ENCODE measurements at regions of chr9 and their contacts with region 1.

Region 1: GRCh38 chr9:128007566-128008138 is 26.9 kb upstream of the EEIG1 start:
- DNase-seq: peak; percentile 75 to 96 (median 90)
- H3K4me3 ChIP-seq: peak overlapping the region; percentile 67
- H3K4me3 Mint-ChIP-seq: peak overlapping the region; percentile 65 to 92 (median 77)
- H3K27ac ChIP-seq: peak overlapping the region; percentile 53
- H3K27ac Mint-ChIP-seq: peak overlapping the region; percentile 91 to 99 (median 97)
- H3K4me1 ChIP-seq: peaks cover 76% of the 10 kb centered on the region
- H3K4me1 Mint-ChIP-seq: peaks cover 40 to 81% (median 54%) of the 10 kb centered on the region in 3 donors
- H3K27me3 ChIP-seq: no peaks in the 10 kb centered on the region
- H3K27me3 Mint-ChIP-seq: no peaks in the 10 kb centered on the region

Region 2: GRCh38 chr9:127763918-127764384 is 243.7 kb before region 1 on chr9:
- CTCF ChIA-PET with region 1: no interaction called
- POLR2A ChIA-PET with region 1: no interaction called
- DNase-seq: peak in 1 of 5 donors; percentile 23
- H3K4me3 ChIP-seq: no peak overlapping the region
- H3K4me3 Mint-ChIP-seq: peak overlapping the region in 1 of 7 donors; percentile 64
- H3K27ac ChIP-seq: no peak overlapping the region
- H3K27ac Mint-ChIP-seq: peak overlapping the region; percentile 57 to 94 (median 72)
- H3K4me1 ChIP-seq: peaks cover 58% of the 10 kb centered on the region
- H3K4me1 Mint-ChIP-seq: peaks cover 60 to 80% (median 67%) of the 10 kb centered on the region in 3 donors
- H3K27me3 ChIP-seq: no peaks in the 10 kb centered on the region
- H3K27me3 Mint-ChIP-seq: peaks cover 0 to 3% of the 10 kb centered on the region in 2 donors

Region 3: DNA sequence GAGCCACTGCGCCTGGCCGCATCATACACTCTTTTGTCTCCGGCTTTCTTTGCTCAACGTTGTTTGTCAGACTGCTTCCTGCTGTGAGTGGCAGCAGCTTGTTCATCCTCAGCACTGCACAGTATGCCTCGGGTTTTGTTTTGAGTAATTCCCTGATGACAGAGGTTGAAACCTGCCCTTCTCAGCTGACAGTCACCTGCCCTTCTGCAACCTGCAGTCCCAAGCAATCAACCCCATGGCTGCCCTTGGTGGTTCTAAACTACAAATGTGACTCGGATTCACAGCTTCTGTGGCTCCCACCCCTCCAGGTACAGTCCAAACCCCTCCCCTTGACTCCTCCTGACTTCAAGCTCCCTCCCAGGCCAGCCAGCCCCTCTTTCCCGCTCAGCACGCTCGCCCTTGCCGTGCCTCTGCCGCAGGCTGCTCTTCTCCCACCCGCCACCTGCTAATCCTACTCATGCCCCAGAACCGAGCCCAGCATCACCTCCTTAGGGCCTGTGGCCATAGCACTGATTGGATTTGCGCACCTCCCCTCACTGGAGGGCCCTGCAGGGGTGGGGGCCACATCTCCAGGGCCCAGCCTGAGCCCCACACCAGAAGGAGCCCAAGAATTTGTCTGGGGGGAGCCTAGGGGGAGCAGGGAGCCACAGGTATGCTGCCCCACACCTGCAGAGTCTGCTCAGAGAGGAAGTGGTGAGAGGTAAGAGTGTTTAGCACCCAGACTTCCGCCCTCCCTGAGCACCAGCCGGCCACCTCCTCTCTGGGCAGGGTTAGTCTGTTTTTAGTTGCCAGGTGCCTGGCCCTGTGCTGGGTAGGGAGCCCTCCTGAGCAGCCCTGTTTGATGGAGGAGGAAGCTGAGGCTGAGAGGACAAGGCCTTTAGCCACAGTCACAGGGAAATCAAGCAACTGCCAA is 37.0 kb before region 1 on chr9:
- CTCF ChIA-PET with region 1: interaction called, 3 read pairs
- POLR2A ChIA-PET with region 1: interaction called, 15 read pairs
- DNase-seq: peak; percentile 36 to 84 (median 75)
- H3K4me3 ChIP-seq: peak overlapping the region; percentile 70
- H3K4me3 Mint-ChIP-seq: peak overlapping the region; percentile 85 to 99 (median 95)
- H3K27ac ChIP-seq: peak overlapping the region; percentile 55
- H3K27ac Mint-ChIP-seq: peak overlapping the region; percentile 87 to 100 (median 98)
- H3K4me1 ChIP-seq: peaks cover 99% of the 10 kb centered on the region
- H3K4me1 Mint-ChIP-seq: peaks cover 95 to 100% (median 100%) of the 10 kb centered on the region in 3 donors
- H3K27me3 ChIP-seq: no peaks in the 10 kb centered on the region
- H3K27me3 Mint-ChIP-seq: peaks cover 0 to 2% of the 10 kb centered on the region in 2 donors

Region 4: DNA sequence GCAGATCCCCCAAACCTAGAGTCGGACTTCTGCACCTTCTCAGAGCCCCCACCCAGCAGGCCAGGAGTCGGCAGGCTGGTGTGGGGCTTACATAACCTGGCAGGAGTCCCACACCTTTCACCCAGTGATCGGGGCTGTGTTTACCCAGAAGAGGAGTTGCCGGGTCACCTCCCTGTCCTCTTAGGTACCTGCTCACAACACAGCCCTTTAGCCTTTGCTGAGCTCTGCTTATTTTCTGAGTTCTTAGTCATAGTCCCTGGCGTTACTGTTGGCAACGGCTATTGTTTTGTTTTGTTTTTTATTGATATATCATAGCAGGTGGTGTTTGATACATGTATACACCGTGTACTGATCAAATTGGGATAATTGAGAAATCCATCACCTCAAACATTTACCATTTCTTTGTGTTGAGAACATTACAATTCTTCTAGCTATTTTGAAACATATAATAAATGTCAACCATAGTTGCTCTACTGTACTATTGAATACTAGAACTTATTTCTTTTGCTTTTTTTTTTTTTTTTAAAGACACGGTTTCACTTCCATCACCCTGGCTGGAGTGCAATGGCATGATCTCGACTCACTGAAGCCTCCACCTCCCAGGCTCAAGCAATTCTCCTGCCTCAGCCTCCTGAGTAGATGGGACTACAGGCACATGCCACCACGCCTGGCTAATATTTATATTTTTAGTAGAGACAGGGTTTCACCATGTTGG is 16.5 kb before region 1 on chr9:
- CTCF ChIA-PET with region 1: interaction called, 4 read pairs
- POLR2A ChIA-PET with region 1: interaction called, 10 read pairs
- DNase-seq: no peak
- H3K4me3 ChIP-seq: no peak overlapping the region
- H3K4me3 Mint-ChIP-seq: no peak overlapping the region
- H3K27ac ChIP-seq: no peak overlapping the region
- H3K27ac Mint-ChIP-seq: peak overlapping the region in 2 of 8 donors; percentile 17 to 66
- H3K4me1 ChIP-seq: peaks cover 21% of the 10 kb centered on the region
- H3K4me1 Mint-ChIP-seq: peaks cover 5 to 18% (median 9%) of the 10 kb centered on the region in 3 donors
- H3K27me3 ChIP-seq: no peaks in the 10 kb centered on the region
- H3K27me3 Mint-ChIP-seq: no peaks in the 10 kb centered on the region

Region 5: DNA sequence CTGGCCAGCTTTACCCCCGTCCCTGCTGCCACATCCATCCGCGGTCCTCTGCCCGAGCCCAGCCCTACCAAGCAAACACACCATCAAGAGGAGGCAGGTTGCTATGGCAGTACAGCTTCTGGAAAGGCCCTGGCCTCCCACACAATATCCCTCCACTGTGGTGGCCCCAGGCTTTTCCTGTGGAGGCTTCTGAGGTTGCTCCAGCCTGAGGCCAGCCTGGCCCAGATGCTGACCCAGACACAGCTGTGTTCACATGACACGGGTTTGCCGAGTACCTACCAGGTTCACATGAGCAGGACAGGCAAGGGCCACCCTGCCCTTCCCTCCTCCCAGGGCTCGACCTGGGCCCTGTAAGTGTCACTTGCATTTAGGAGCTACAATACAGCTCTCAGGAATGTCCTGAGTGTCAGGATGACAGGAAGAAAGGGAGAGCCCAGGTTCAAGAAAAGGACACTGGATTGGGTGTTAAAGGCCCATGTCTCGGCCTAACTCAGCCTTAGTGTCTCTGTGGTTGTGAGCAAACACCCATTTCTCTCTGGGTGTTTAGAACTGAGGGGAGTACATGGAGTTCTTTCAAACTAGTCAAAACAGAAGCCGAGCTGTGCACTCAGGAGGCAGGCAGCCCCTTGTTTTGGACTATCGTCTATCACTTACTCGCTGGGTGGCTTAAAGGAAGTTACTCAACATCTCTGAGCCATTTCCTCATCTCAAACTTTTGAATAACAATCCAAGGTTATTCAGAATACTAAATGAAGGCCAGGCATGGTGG is 19.3 kb after region 1 on chr9:
- CTCF ChIA-PET with region 1: interaction called, 17 read pairs
- POLR2A ChIA-PET with region 1: interaction called, 20 read pairs
- DNase-seq: peak; percentile 31 to 74 (median 66)
- H3K4me3 ChIP-seq: peak overlapping the region; percentile 60
- H3K4me3 Mint-ChIP-seq: peak overlapping the region; percentile 72 to 90 (median 80)
- H3K27ac ChIP-seq: peak overlapping the region; percentile 84
- H3K27ac Mint-ChIP-seq: peak overlapping the region; percentile 96 to 99 (median 98)
- H3K4me1 ChIP-seq: peaks cover 93% of the 10 kb centered on the region
- H3K4me1 Mint-ChIP-seq: peaks cover 84 to 96% (median 89%) of the 10 kb centered on the region in 3 donors
- H3K27me3 ChIP-seq: no peaks in the 10 kb centered on the region
- H3K27me3 Mint-ChIP-seq: no peaks in the 10 kb centered on the region